Activated naive CD4-positive, alpha-beta T cell treated with anti-CD3 and anti-CD28 coated beads for 36 hours (primary cell): ENCODE measurements at regions of chr3 and their contacts with region 1.

Region 1: DNA sequence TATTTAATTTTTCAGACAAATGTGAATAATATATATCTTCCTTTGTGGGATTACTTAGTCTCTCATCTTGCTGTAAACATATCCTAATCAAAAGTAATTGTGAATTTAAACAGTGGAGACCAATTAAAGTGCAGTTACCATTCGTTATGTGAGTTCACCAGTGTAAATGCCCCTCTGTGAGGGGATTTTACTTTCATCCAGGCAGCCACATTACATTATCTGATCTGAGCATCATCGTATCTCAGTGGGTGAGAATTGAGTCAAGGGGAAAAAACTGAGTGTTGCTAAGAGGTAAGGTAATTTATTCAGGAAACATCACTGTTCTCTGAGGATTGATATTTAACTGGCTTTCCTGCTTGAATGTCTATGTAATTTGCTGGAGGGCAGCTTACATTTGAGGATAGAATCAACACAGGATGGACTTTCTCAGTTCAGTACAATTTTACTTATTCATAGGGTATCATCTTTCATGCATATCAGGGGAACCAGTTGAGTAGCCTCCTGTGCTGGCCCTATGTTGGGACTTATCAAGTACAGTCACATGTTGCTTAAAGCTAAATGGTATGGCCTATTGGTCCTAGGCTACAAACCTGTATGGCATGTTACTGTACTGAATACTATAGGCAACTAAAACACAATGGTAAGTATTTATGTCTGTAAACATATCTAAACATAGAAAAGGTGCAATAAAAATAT is 219.7 kb downstream of the CD47 start:
- DNase-seq: peak; percentile 18
- H3K4me3 Mint-ChIP-seq: no peak overlapping the region
- H3K27ac Mint-ChIP-seq: no peak overlapping the region
- H3K4me1 Mint-ChIP-seq: peaks cover 11% of the 10 kb centered on the region
- H3K27me3 Mint-ChIP-seq: peaks cover 4% of the 10 kb centered on the region

Region 2: DNA sequence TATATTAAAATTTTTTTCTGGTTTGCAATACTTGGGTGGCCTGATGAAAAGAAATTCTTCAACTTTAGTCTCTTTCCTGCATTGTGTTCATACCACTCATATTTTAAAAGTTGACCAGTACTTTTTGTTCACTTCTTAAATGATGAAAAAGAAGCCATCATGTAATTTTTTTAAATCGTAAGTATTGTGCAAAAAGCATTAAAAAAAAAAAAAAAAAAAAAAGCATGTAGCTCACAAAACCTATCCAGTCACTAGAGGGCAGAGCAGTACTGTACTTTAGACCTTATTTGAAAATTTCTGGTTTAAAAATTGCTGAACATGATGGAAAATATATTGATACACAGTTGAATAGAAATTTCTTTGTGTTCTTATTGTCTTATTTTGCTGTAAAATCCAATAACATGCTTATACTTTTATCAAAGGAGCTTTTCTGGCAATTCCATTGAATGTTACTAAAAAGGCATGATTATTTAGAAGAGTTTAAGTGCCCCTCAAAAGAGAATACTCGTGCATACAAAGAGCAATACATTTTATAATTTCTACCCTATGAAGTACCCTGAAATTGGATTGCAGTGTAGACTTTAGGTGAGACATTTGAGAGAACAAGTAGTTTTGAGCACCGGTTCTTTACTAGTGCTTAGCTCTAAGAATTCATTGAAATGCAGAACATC is 210.7 kb before region 1 on chr3:
- CTCF ChIA-PET with region 1: no interaction called
- intact Hi-C with region 1: no loop called
- DNase-seq: no peak
- H3K4me3 Mint-ChIP-seq: no peak overlapping the region
- H3K27ac Mint-ChIP-seq: no peak overlapping the region
- H3K4me1 Mint-ChIP-seq: peaks cover 21% of the 10 kb centered on the region
- H3K27me3 Mint-ChIP-seq: no peaks in the 10 kb centered on the region

Region 3: DNA sequence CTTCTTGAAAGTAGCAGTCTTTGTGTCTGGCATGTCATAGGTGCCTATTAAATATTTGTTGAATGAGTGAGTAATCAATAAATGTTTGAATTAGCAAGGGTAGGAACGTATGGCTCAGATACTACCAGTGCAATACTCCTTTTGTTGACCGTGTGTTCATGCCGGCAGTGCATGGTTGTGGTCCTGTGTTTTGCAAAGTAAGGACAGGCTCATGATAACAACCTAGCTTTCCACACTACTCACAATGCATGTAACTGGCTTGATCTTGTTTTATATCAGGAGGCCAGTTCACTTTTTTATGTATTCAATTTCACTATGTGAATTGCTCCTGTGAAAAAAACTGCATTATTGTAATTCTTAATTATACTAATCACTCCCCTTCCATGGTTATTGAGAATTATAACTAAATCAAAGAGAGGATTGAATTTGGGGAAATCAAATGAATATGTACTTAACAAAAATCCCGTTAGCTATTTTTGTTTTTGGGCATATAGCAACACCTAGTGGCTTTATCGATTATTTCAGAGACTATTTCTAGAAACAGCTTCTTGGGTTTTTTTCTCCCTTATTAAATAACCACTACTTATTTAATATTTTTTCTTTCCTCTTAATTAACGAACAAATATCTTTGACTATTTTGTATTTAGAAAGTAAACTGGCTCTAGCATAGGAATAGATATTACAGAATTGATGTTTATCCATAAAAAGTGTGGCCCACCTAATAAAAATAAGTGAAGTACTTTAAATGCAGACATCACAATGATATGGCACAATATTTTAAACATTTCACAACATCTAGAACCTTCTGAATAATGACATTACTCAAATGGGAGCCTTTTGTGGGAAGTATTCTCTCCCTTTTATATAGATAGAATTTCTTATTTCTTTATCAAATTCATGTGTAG is 129.8 kb before region 1 on chr3:
- CTCF ChIA-PET with region 1: no interaction called
- intact Hi-C with region 1: no loop called
- DNase-seq: no peak
- H3K4me3 Mint-ChIP-seq: no peak overlapping the region
- H3K27ac Mint-ChIP-seq: no peak overlapping the region
- H3K4me1 Mint-ChIP-seq: no peaks in the 10 kb centered on the region
- H3K27me3 Mint-ChIP-seq: no peaks in the 10 kb centered on the region

Region 4: DNA sequence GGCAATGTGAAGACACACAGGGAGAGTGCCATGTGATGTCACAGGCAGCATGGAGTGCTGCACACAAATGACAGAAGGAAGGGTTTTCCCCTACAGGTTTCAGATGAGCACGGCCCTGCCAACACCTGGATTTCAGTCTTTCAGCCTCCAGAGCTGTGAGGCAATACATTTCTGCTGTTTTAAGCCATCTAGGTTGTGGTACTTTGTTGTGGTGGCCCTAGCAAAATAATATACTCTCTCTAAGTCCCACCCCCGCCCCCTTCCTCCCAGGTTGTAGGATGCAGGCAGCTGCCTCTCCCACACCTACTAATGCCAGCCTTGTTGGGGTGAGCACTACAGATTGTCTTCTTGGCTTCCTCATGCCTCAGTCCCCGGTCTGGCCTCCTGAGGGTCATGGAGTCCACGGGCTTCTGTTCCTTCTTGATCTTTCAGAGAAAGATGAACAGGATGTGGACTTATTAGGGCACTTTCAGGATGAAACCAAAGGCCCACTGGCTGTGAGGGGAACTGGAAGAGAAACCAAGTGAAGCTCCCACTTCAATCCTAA is 39.7 kb after region 1 on chr3:
- CTCF ChIA-PET with region 1: interaction called, 3 read pairs
- intact Hi-C with region 1: loop called (anchors 2 kb)
- DNase-seq: peak; percentile 75
- H3K4me3 Mint-ChIP-seq: no peak overlapping the region
- H3K27ac Mint-ChIP-seq: no peak overlapping the region
- H3K4me1 Mint-ChIP-seq: peaks cover 22% of the 10 kb centered on the region
- H3K27me3 Mint-ChIP-seq: no peaks in the 10 kb centered on the region